ENCODE measurements at regions of chr9 and their contacts with region 1.

Region 1: GRCh38 chr9:95078958-95079357 is 238.6 kb downstream of the FANCC start:
- DNase-seq: peak in 1 of 2 donors; percentile 76
- H3K4me3 ChIP-seq: peak overlapping the region; percentile 25 to 47
- H3K27ac ChIP-seq: peak overlapping the region; percentile 84 to 95
- H3K4me1 ChIP-seq: peaks cover 37 to 85% of the 10 kb centered on the region in 2 donors
- H3K27me3 ChIP-seq: no peaks in the 10 kb centered on the region
- CTCF ChIP-seq: no peak

Region 2: GRCh38 chr9:95037789-95038517 is 41.0 kb before region 1 on chr9:
- intact Hi-C with region 1: no loop called
- DNase-seq: no peak
- H3K4me3 ChIP-seq: peak overlapping the region in 1 of 2 donors; percentile 28
- H3K27ac ChIP-seq: peak overlapping the region; percentile 69 to 99
- H3K4me1 ChIP-seq: peaks cover 16 to 72% of the 10 kb centered on the region in 2 donors
- H3K27me3 ChIP-seq: no peaks in the 10 kb centered on the region
- CTCF ChIP-seq: no peak

Region 3: DNA sequence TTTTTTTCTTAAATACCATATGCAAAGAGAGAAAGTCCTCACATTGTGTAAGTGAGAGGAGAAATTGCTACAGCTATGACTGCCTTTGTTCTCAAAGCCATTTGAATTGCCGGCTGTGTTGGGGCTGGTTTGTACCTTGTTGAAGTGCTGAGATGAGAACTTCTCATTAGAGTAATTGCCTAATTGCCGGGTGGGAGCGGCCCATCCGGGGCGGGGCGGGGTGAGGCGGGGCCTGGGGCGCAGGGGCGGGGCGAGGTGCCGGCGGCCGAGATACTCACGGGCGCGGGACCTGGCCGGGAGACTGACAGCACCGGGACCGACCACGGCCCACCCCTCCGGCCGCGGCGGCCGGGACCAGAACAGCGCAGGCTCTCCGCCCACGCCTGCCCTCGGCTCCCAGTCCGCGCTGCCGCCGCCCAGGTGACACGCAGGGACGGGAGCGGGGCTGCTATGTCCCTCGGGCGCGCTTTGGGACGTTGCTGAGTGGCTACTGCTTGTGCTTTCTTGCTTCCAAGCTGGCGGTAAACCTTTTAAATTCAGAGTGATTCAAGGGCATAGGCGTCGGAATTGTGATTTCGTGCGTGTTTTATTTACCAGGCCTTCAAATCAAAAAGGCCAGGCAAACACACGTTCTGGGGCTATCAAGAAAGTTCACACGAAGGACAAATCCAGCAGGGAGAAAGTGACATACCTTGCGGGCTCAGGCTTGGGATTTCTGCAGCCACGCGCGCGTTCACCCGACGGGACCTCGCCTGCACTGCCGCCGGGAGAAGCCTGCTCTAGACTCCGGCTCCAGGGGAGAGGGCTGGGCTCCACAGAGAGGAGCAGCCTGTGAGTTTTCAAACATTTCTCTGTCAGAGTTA is 30.5 kb before region 1 on chr9:
- intact Hi-C with region 1: loop called (anchors 2 kb)
- DNase-seq: peak in 1 of 2 donors; percentile 74
- H3K4me3 ChIP-seq: peak overlapping the region; percentile 54 to 67
- H3K27ac ChIP-seq: peak overlapping the region; percentile 84 to 95
- H3K4me1 ChIP-seq: peaks cover 16 to 46% of the 10 kb centered on the region in 2 donors
- H3K27me3 ChIP-seq: no peaks in the 10 kb centered on the region
- CTCF ChIP-seq: no peak